Mammary epithelial cell (primary cell): ENCODE measurements at regions of chr22 and their contacts with region 1.

Region 1: DNA sequence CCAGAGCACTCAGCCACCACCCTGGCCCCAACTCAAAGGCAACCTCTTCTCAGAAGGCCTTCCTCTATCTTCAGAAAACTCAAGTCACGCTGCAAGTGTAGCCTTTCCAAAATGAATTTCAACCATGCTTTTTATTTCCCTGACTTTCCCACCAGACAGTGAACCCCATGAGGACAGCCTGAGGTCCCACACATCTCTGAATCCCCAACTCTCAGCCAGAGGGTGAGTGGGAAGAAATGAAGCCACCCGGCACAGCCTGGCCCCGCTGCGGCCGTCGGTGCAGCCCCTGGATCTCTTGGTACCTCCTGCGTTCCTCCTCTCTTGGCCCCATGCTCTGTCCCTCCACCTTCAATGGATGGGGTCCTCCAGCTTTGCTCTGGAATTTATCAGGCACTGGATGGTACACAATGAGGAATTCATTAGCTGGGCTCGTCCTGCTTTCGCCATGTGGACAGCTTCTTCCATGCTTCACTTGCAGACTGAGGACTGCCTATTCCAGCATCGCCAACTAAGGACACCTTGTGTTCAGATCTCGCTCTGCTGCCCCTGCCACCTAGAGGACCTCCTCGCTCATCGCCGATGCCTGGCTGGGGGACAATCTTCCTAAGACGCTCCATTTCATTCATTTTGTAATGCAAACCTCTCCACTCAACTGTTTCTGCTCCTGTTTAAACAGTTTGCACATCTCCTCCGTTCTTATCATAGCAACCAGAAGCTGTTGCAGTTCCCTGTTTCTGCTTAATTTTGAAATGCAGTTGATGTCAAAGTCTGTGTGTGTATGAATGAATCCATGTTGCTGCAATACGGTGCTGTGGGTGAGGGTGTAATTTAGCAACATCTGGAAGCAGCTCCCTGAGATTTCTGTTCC is 672.1 kb downstream of the TBC1D22A start:
- DNase-seq: no peak
- H3K4me3 ChIP-seq: no peak overlapping the region
- H3K27ac ChIP-seq: no peak overlapping the region
- H3K4me1 ChIP-seq: no peaks in the 10 kb centered on the region
- H3K27me3 ChIP-seq: no peaks in the 10 kb centered on the region
- CTCF ChIP-seq: no peak

Region 2: GRCh38 chr22:47495110-47495509 is 60.5 kb after region 1 on chr22:
- CTCF ChIA-PET with region 1: no interaction called
- dilution Hi-C with region 1: loop called (anchors 5 kb)
- in situ Hi-C with region 1: no loop called
- intact Hi-C with region 1: no loop called
- DNase-seq: no peak
- H3K4me3 ChIP-seq: no peak overlapping the region
- H3K27ac ChIP-seq: no peak overlapping the region
- H3K4me1 ChIP-seq: no peaks in the 10 kb centered on the region
- H3K27me3 ChIP-seq: no peaks in the 10 kb centered on the region
- CTCF ChIP-seq: no peak